AG04449 (cell line): ENCODE measurements at regions of chr1 and their contacts with region 1.

Region 1: GRCh38 chr1:98794196-98794886 is 132.8 kb downstream of the SNX7 start:
- DNase-seq: peak; percentile 26
- H3K4me3 ChIP-seq: no peak overlapping the region
- CTCF ChIP-seq: peak; percentile 73

Region 2: GRCh38 chr1:98761219-98761865 is 33.0 kb before region 1 on chr1:
- CTCF ChIA-PET with region 1: interaction called, 12 read pairs
- POLR2A ChIA-PET with region 1: no interaction called
- DNase-seq: no peak
- H3K4me3 ChIP-seq: no peak overlapping the region
- CTCF ChIP-seq: no peak

Region 3: GRCh38 chr1:99737016-99737415 is 942.7 kb after region 1 on chr1:
- CTCF ChIA-PET with region 1: interaction called, 11 read pairs
- POLR2A ChIA-PET with region 1: no interaction called
- DNase-seq: peak; percentile 26
- H3K4me3 ChIP-seq: no peak overlapping the region
- CTCF ChIP-seq: peak; percentile 43